HepG2 (cell line): ENCODE measurements at regions of chr17 and their contacts with region 1.

Region 1: DNA sequence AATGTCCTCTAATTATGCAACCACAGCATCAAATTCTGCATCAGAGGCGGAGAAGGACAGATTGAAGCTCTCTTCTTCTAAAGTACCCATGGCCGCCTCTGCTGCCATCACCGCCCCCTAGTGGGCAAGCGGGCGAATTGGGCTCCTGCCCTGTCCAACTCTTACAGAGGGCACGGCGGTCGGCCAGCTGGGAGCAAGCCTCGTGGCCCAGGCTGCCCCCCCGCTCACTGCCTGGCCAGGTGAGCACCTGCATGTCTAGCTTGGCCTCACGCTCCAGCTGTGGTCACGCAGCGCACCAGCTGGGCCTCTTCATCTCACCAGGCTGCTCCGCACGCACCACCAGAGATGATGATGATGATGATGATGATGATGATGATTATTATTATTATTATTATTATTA is 146.1 kb upstream of the TOM1L1 start:
- DNase-seq: peak; percentile 16
- ATAC-seq: peak; percentile 92
- H3K4me3 ChIP-seq: no peak overlapping the region
- H3K27ac ChIP-seq: no peak overlapping the region
- H3K4me1 ChIP-seq: no peaks in the 10 kb centered on the region
- H3K27me3 ChIP-seq: no peaks in the 10 kb centered on the region
- CTCF ChIP-seq: peak; percentile 58
- EP300 ChIP-seq: no peak
- POLR2A ChIP-seq: no peak
- RAD21 ChIP-seq: peak; percentile 19; the same call in 1 of the 2 replicates

Region 2: DNA sequence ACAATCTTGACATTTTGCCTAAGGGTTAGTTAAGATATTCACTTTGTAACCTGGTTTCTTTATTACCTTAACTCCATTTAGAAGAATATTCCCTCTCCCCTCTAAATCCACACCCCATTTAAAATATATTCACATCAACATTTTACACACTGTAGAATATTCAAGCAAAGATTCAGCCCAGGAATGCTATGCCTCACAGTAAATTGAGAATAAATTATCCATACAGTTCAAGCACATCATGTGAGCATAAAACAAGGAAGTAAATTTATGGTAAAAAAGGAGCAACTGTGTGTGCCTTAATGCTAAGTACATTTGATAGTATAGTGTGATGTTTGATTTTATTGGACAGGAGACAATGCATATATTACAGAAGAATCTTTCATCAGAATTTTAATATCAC is 1738.5 kb before region 1 on chr17:
- CTCF ChIA-PET with region 1: no interaction called
- POLR2A ChIA-PET with region 1: no interaction called
- in situ Hi-C with region 1: no loop called
- intact Hi-C with region 1: loop called (anchors 5 kb)
- DNase-seq: no peak
- ATAC-seq: no peak
- H3K4me3 ChIP-seq: no peak overlapping the region
- H3K27ac ChIP-seq: no peak overlapping the region
- H3K4me1 ChIP-seq: no peaks in the 10 kb centered on the region
- H3K27me3 ChIP-seq: no peaks in the 10 kb centered on the region
- CTCF ChIP-seq: no peak
- EP300 ChIP-seq: no peak
- POLR2A ChIP-seq: no peak
- RAD21 ChIP-seq: no peak

Region 3: GRCh38 chr17:53032861-53033271 is 1721.7 kb before region 1 on chr17:
- CTCF ChIA-PET with region 1: no interaction called
- POLR2A ChIA-PET with region 1: no interaction called
- in situ Hi-C with region 1: no loop called
- intact Hi-C with region 1: loop called (anchors 5 kb)
- DNase-seq: peak; percentile 71
- ATAC-seq: peak; percentile 90
- H3K4me3 ChIP-seq: no peak overlapping the region
- H3K27ac ChIP-seq: no peak overlapping the region
- H3K4me1 ChIP-seq: peaks cover 8% of the 10 kb centered on the region
- H3K27me3 ChIP-seq: no peaks in the 10 kb centered on the region
- CTCF ChIP-seq: peak; percentile 74
- EP300 ChIP-seq: no peak
- POLR2A ChIP-seq: no peak
- RAD21 ChIP-seq: peak; percentile 42; the same call in 1 of the 2 replicates

Region 4: GRCh38 chr17:54157542-54157941 is 597.0 kb before region 1 on chr17:
- CTCF ChIA-PET with region 1: no interaction called
- POLR2A ChIA-PET with region 1: no interaction called
- in situ Hi-C with region 1: no loop called
- intact Hi-C with region 1: no loop called
- DNase-seq: no peak
- ATAC-seq: no peak
- H3K4me3 ChIP-seq: no peak overlapping the region
- H3K27ac ChIP-seq: no peak overlapping the region
- H3K4me1 ChIP-seq: no peaks in the 10 kb centered on the region
- H3K27me3 ChIP-seq: no peaks in the 10 kb centered on the region; a peak in 1 of 5 replicates
- CTCF ChIP-seq: no peak
- EP300 ChIP-seq: no peak
- POLR2A ChIP-seq: no peak
- RAD21 ChIP-seq: no peak